ENCODE measurements at regions of chr2 and their contacts with region 1.

Region 1: DNA sequence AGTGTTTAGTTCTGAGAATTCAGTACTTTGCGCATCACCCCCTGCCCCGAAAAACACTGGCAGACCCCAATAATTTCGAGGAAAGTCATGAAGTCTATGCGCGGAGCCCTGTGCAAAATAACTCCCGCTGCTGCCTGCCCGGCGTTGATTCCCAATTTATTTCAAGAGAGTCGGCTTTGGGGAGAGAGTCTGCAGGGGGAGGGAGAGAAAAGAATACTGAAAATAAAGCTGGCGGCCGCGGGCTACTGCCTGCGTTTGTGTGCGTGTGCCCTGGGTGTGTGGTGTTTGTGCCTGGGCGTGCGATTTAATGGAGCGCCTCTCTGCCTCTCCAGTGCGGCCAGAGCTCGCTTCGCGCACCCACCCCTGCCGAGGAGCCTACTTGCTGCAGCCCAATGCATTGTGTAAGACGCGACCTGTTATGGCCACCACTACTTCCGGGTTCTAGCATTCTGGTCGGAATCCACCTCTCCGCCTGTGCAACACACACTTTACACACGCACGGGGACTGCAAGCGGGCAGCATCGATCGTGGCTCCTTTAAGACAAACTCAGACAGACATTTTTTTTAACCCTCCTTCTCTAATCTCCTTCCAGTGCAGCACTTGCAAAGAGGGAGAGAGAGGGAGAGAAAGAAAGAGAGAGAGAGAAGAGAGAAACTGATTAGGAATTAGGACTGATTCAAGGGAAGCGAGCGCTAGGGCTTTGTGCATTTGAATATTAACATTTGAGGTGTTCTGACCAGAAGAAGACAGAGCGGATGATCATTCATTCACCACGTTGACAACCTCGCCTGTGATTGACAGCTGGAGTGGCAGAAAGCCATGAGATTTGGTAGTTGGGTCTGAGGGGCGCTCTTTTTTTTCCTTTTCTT is at the start of gene MEIS1:
- DNase-seq: peak; percentile 94
- H3K4me3 Mint-ChIP-seq: peak within 1 kb of the TSS; percentile 84
- H3K27ac Mint-ChIP-seq: peak within 1 kb of the TSS; percentile 89
- H3K4me1 Mint-ChIP-seq: peaks cover 6% of the 10 kb centered on the region
- H3K27me3 Mint-ChIP-seq: no peaks in the 10 kb centered on the region
- CTCF ChIP-seq: no peak
- total RNA-seq, gene MEIS1: 4.1 and 4.4 TPM in 2 replicates

Region 2: DNA sequence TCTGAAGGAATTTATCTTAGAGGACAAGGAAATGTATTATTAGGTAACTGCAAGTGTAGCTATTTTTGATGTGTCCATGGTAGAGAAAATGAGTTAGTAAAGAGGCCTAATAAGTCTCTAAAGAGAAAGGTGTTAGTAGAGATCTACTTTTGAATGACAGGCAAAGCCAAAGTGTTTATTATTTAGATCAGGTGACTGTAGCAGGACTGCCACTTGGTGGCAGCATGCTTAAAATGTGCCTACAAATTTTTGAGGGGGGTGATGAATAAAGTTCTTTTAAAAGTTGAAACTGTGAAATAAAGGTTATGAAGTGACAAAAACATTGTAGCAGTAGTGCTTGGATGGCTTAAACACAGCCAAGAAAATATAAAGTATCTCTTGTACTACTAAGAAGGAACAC is 421.4 kb before region 1 on chr2:
- CTCF ChIA-PET with region 1: interaction called, 3 read pairs
- POLR2A ChIA-PET with region 1: interaction called, 4 read pairs
- intact Hi-C with region 1: loop called (anchors 5 kb)
- DNase-seq: peak; percentile 23
- H3K4me3 Mint-ChIP-seq: no peak overlapping the region
- H3K27ac Mint-ChIP-seq: no peak overlapping the region
- H3K4me1 Mint-ChIP-seq: peaks cover 5% of the 10 kb centered on the region
- H3K27me3 Mint-ChIP-seq: no peaks in the 10 kb centered on the region
- CTCF ChIP-seq: peak; percentile 22

Region 3: DNA sequence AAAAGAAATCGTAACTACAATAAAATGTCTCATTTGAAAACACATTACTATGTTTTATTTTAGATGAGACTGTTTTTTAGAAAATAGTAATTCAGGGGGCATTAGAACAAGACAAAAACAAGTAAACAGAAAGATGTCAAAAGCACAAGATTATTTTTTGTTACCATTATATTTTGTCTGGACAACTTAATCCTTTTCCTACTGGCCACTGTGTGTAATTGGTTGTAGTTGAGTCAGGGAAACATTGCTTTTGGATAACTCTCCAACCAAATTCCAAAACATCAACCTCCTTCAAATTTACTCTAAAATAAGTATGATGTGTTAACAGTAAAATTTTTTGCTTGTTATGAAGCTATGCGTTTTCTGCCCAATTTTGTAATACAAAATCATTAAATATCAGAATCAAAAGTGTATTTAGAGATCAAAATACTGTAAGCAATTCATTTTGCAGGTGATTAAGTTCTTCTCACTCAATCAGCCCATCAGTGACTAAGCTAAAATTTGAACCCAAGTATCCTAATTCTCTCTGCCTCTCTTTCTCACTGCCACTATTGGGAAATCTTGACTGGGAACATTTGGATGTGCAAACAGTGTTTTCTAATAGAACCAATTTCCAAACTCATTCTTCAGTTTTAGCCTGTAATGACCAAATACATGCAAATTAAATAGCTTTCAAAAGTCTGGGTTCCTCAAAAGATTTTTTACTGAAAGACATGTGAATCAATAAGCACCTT is 11.4 kb before region 1 on chr2:
- CTCF ChIA-PET with region 1: interaction called, 10 read pairs
- POLR2A ChIA-PET with region 1: interaction called, 8 read pairs
- intact Hi-C with region 1: no loop called
- DNase-seq: no peak
- H3K4me3 Mint-ChIP-seq: no peak overlapping the region
- H3K27ac Mint-ChIP-seq: no peak overlapping the region
- H3K4me1 Mint-ChIP-seq: no peaks in the 10 kb centered on the region
- H3K27me3 Mint-ChIP-seq: peaks cover 11% of the 10 kb centered on the region
- CTCF ChIP-seq: no peak

Region 4: DNA sequence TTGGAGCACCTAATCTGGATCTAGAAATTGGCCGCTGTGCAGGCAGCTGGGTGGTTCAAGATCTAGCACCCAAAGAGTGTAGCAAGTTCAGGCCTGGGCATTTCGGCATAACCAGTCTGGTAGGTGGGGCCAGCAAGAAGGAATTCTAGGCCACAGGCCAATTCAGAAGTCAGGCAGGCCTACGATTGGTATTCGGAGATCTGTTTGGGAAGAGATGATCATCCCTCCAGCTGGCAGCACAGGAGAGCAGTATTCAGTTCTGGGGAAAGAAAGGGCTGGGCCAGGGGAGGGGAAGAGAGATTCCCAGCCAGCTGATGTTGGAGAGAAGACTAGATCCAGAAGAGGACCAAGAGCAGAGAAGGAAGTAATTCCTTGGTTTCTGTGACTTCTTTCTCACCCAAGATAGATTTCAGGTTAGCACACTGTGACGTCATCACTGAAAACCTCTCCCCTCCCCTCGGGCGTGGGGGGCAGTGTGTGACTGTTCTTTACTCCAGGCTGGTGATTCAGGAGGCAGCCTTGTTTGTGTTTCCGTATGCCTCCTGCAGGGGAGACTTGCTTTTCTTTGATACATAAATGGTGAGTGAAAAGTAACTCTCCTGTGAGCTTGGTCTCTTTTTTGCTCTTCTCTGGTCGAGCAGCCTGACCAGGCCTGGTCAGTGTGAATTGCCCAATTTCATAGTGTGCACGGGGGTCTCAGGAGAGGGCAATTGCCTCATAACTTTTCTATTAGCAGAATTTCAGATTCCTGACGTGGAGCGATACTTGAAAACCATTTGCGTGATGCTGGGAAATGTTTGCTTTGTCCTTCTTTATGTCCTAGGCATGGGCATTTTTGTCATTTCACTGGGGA is 61.1 kb after region 1 on chr2:
- CTCF ChIA-PET with region 1: interaction called, 5 read pairs
- POLR2A ChIA-PET with region 1: interaction called, 48 read pairs
- intact Hi-C with region 1: loop called (anchors 1 kb)
- DNase-seq: peak; percentile 95
- H3K4me3 Mint-ChIP-seq: peak overlapping the region; percentile 62
- H3K27ac Mint-ChIP-seq: peak overlapping the region; percentile 85
- H3K4me1 Mint-ChIP-seq: peaks cover 50% of the 10 kb centered on the region
- H3K27me3 Mint-ChIP-seq: no peaks in the 10 kb centered on the region
- CTCF ChIP-seq: peak; percentile 27

Region 5: DNA sequence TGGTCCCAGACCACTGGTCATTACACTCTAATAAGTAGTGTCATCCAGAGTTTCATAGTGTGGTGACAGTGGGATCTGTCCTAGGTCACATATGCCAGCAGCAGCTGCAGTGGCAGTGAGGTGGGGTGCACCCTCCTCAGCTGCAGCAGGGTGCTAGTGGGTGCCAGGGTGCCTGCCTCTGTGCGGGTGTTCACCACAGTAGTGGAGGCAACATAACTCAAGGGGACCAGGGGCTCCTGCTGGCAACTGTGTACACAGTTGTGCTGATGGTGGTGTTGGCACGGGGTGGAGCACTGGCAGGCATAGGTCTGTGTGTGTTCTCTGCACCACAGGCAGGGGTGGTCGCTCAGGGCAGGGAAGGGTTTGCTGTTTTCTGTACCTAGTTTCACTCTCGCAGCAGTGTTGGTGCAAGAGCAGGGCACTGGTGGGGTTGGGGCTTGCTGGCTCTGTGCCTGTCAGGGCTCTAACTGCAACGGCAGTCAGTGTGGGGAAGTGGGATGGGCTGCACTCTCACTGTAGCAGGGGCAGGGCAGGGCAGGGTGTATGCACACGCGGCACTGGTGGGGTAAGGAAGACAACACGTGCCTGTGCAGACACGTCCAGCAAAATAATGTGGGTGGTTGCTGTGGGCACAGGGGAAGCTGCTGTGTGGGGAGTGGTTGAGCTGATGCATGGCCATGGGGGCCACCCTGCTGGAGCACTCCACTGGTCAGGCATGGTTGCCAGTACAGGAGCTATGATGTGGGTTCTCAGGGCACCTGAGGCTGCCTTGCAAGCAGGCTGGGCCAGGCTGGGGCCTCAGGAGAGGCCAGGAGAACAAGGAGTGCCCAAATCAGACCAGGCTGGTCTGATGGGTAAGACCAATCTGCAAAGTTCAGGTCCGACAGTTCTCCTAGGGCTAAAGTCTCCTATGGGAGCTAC is 226.6 kb after region 1 on chr2:
- CTCF ChIA-PET with region 1: no interaction called
- POLR2A ChIA-PET with region 1: no interaction called
- intact Hi-C with region 1: no loop called
- DNase-seq: no peak
- H3K4me3 Mint-ChIP-seq: no peak overlapping the region
- H3K27ac Mint-ChIP-seq: no peak overlapping the region
- H3K4me1 Mint-ChIP-seq: peaks cover 10% of the 10 kb centered on the region
- H3K27me3 Mint-ChIP-seq: no peaks in the 10 kb centered on the region
- CTCF ChIP-seq: no peak

Region 6: GRCh38 chr2:66721776-66722175 is 286.9 kb after region 1 on chr2:
- CTCF ChIA-PET with region 1: no interaction called
- POLR2A ChIA-PET with region 1: no interaction called
- intact Hi-C with region 1: no loop called
- DNase-seq: no peak
- H3K4me3 Mint-ChIP-seq: no peak overlapping the region
- H3K27ac Mint-ChIP-seq: no peak overlapping the region
- H3K4me1 Mint-ChIP-seq: no peaks in the 10 kb centered on the region
- H3K27me3 Mint-ChIP-seq: no peaks in the 10 kb centered on the region
- CTCF ChIP-seq: no peak

Region 7: DNA sequence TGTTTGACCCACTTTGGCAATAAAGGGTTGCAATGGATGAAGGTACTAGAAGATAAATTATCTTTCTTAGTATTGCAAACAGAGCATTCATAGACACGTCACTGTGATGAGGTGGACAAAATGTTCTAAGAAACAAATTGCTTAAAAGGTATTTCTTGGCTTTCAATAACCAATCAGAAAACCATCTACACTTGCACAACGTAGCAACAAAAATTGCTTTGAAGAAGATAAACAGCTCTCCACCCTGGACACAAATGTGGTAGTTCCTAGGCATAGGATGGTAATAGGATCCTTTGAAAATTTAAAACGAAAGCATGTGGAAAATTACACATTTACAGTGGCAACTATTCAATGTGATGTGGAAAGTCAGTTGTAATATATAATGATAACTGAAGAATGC is 522.3 kb after region 1 on chr2:
- CTCF ChIA-PET with region 1: no interaction called
- POLR2A ChIA-PET with region 1: interaction called, 23 read pairs
- intact Hi-C with region 1: no loop called
- DNase-seq: peak; percentile 44
- H3K4me3 Mint-ChIP-seq: no peak overlapping the region
- H3K27ac Mint-ChIP-seq: peak overlapping the region; percentile 81
- H3K4me1 Mint-ChIP-seq: peaks cover 22% of the 10 kb centered on the region
- H3K27me3 Mint-ChIP-seq: no peaks in the 10 kb centered on the region
- CTCF ChIP-seq: no peak

Region 8: GRCh38 chr2:67397143-67397986 is 962.5 kb after region 1 on chr2 and contains the start of gene ETAA1:
- CTCF ChIA-PET with region 1: no interaction called
- POLR2A ChIA-PET with region 1: interaction called, 15 read pairs
- intact Hi-C with region 1: loop called (anchors 2 kb)
- DNase-seq: peak; percentile 92
- H3K4me3 Mint-ChIP-seq: peak within 1 kb of the TSS; percentile 91
- H3K27ac Mint-ChIP-seq: peak within 1 kb of the TSS; percentile 92
- H3K4me1 Mint-ChIP-seq: peaks cover 36% of the 10 kb centered on the region
- H3K27me3 Mint-ChIP-seq: no peaks in the 10 kb centered on the region
- CTCF ChIP-seq: no peak
- total RNA-seq, gene ETAA1: 10.4 and 11.7 TPM in 2 replicates

Region 9: GRCh38 chr2:67684991-67685390 is 1250.1 kb after region 1 on chr2:
- CTCF ChIA-PET with region 1: no interaction called
- POLR2A ChIA-PET with region 1: no interaction called
- intact Hi-C with region 1: no loop called
- DNase-seq: peak; percentile 8
- H3K4me3 Mint-ChIP-seq: no peak overlapping the region
- H3K27ac Mint-ChIP-seq: no peak overlapping the region
- H3K4me1 Mint-ChIP-seq: no peaks in the 10 kb centered on the region
- H3K27me3 Mint-ChIP-seq: no peaks in the 10 kb centered on the region
- CTCF ChIP-seq: no peak

Region 10: GRCh38 chr2:68031542-68032160 is 1596.7 kb after region 1 on chr2:
- CTCF ChIA-PET with region 1: interaction called, 4 read pairs
- POLR2A ChIA-PET with region 1: interaction called, 5 read pairs
- intact Hi-C with region 1: loop called (anchors 1 kb)
- DNase-seq: peak; percentile 71
- H3K4me3 Mint-ChIP-seq: no peak overlapping the region
- H3K27ac Mint-ChIP-seq: no peak overlapping the region
- H3K4me1 Mint-ChIP-seq: peaks cover 5% of the 10 kb centered on the region
- H3K27me3 Mint-ChIP-seq: no peaks in the 10 kb centered on the region
- CTCF ChIP-seq: peak; percentile 66